Motor neuron (in vitro differentiated cells): ENCODE measurements at regions of chr12 and their contacts with region 1.

Region 1: DNA sequence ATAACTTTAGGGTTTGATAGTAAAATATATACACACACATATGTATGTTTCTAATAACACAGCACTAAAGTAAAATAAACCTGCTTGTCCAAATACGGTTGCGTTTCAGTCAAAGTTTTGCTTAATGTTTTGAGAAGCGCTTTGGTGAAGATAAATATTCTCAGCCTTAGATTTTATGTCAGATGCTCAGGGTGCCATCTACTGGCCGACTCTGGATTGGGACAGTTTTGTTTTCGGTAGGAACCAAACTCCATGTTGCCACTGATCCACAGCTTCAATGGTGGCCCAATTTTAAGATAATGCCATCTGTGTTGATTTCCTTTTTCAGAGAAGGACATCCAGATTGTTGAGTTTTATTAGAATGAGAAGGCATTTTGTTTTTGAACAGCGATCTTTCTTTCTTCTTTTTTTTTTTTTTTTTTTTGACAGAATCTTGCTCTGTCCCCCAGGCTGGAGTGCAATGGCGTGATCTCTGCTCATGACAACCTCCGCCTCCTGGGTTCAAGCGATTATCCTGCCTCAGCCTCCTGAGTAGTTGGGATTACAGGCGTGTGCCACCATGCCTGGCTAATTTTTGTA is 43.1 kb downstream of the LLPH start:
- ATAC-seq: peak in 5 of 8 experiments; percentile 30 to 77 (median 74)
- H3K4me3 ChIP-seq: no peak overlapping the region
- H3K27ac ChIP-seq: no peak overlapping the region
- H3K4me1 ChIP-seq: no peaks in the 10 kb centered on the region

Region 2: GRCh38 chr12:64890873-64891468 is 1196.5 kb before region 1 on chr12:
- in situ Hi-C with region 1: loop called in 1 of 9 experiments (anchors 25 kb)
- ATAC-seq: peak; percentile 48 to 72 (median 58)
- H3K4me3 ChIP-seq: no peak overlapping the region
- H3K27ac ChIP-seq: no peak overlapping the region
- H3K4me1 ChIP-seq: no peaks in the 10 kb centered on the region

Region 3: GRCh38 chr12:65536876-65537661 is 550.4 kb before region 1 on chr12:
- in situ Hi-C with region 1: loop called in 1 of 9 experiments (anchors 25 kb)
- ATAC-seq: peak in 3 of 8 experiments; percentile 41 to 96 (median 95)
- H3K4me3 ChIP-seq: no peak overlapping the region
- H3K27ac ChIP-seq: no peak overlapping the region
- H3K4me1 ChIP-seq: peaks cover 0 to 24% of the 10 kb centered on the region in 2 donors

Region 4: DNA sequence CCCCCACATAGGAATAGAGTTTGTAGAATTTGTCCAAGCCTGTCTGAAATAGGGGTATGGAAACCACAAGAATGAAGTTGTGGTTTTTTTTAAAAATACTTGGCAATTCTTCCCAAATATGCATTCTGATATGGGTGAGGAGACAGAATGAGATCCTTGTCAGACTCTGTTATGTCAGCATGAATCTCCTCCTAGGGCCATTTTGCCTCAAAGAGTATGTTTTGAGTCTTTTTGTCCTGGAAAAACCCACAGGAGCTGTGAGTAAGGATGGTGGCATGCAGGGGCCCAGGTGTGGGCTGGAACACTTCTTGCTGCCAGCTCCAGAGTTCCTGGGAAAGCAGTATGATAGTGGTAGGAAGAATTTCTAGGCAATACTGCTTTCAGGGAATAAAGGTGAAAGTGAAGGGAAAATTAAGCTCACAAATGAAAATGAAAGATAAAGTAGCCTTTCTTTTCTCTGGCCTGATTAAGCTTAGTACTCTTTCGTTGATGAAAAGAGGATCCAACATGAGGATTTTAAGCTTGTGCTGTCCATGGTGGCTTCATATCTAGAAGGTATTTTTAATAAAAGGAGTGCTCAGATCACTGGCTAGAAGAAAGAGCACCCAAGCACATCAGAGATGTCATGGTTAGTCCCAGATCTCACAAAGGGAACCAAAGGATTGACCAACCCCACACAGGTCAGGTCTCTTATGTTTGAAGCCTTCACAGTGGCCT is 87.7 kb before region 1 on chr12:
- in situ Hi-C with region 1: loop called in 2 of 9 experiments (anchors 25 kb)
- ATAC-seq: no peak
- H3K4me3 ChIP-seq: no peak overlapping the region
- H3K27ac ChIP-seq: no peak overlapping the region
- H3K4me1 ChIP-seq: no peaks in the 10 kb centered on the region

Region 5: GRCh38 chr12:66176105-66176900 is 88.8 kb after region 1 on chr12:
- in situ Hi-C with region 1: no loop called
- ATAC-seq: peak in 1 of 8 experiments; percentile 81
- H3K4me3 ChIP-seq: no peak overlapping the region
- H3K27ac ChIP-seq: no peak overlapping the region
- H3K4me1 ChIP-seq: no peaks in the 10 kb centered on the region